Activated naive CD8-positive, alpha-beta T cell treated with anti-CD3 and anti-CD28 coated beads, Interleukin-2, amount 10 ng/mL, durations not matched to agents 7 days and 5 days (primary cell): ENCODE measurements at regions of chr14 and their contacts with region 1.

Region 1: DNA sequence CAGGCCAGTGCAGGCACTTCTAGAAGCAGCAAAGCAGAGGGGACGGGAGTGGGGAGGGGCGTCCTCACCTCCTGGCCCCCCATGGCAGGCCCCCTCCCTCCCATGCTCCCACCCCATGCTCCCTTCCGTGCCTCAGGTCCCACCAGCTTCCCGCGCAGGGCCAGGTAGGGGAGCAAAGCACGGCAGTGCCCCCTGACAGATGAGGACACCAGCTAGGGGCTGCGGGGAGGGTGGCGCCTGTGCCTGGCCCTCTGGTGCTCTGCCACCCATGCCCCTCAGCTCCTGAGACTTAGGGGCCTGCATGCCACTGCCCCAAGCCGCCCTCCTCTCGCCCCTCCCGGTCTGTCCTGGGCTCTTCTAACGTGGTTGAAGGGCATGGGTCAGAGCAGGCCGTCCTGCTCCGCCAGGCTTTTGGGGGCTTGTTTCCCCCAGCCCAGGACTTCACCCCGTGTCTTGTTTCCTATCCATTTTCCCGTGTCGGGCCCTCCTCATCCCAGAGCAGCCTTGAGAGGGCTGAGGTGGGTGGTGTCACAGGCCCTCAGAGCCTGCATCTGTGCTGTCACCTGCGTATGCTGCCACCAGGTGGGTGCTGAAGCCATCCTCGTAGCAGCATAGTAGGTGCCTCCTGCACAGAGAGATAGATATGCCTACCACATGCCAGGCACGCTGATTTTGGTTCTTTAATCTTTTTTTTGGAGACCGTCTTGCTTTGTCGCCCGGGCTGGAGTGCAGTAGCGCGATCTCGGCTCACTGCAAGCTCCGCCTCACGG is 10.2 kb downstream of the TRMT61A start:
- DNase-seq: no peak
- ATAC-seq: no peak
- H3K4me3 Mint-ChIP-seq: no peak overlapping the region
- H3K27ac Mint-ChIP-seq: no peak overlapping the region
- H3K4me1 Mint-ChIP-seq: no peaks in the 10 kb centered on the region
- H3K27me3 Mint-ChIP-seq: peaks cover 2% of the 10 kb centered on the region

Region 2: GRCh38 chr14:103361868-103362267 is 177.4 kb before region 1 on chr14:
- POLR2A ChIA-PET with region 1: no interaction called
- DNase-seq: no peak
- ATAC-seq: no peak
- H3K4me3 Mint-ChIP-seq: no peak overlapping the region
- H3K27ac Mint-ChIP-seq: no peak overlapping the region
- H3K4me1 Mint-ChIP-seq: peaks cover 6% of the 10 kb centered on the region
- H3K27me3 Mint-ChIP-seq: peaks cover 4% of the 10 kb centered on the region

Region 3: GRCh38 chr14:103528587-103529382 is 10.5 kb before region 1 on chr14 and contains the start of gene TRMT61A:
- POLR2A ChIA-PET with region 1: interaction called, 12 read pairs
- DNase-seq: peak; percentile 83
- ATAC-seq: peak; percentile 79
- H3K4me3 Mint-ChIP-seq: peak within 1 kb of the TSS; percentile 98
- H3K27ac Mint-ChIP-seq: peak within 1 kb of the TSS; percentile 97
- H3K4me1 Mint-ChIP-seq: peaks cover 27% of the 10 kb centered on the region
- H3K27me3 Mint-ChIP-seq: peaks cover 12% of the 10 kb centered on the region
- total RNA-seq, gene TRMT61A: 7.8 to 9.2 TPM